ENCODE measurements at regions of chr13 and their contacts with region 1.

Region 1: GRCh38 chr13:28324181-28324789 is 170.6 kb downstream of the FLT1 start:
- DNase-seq: no peak
- H3K4me3 ChIP-seq: no peak overlapping the region
- H3K27ac ChIP-seq: no peak overlapping the region
- H3K4me1 ChIP-seq: peaks cover 0 to 10% (median 4%) of the 10 kb centered on the region in 4 donors
- H3K27me3 ChIP-seq: no peaks in the 10 kb centered on the region
- CTCF ChIP-seq: peak in 3 of 4 experiments; percentile 30 to 60 (median 41)
- EP300 ChIP-seq: no peak
- POLR2A ChIP-seq: no peak

Region 2: DNA sequence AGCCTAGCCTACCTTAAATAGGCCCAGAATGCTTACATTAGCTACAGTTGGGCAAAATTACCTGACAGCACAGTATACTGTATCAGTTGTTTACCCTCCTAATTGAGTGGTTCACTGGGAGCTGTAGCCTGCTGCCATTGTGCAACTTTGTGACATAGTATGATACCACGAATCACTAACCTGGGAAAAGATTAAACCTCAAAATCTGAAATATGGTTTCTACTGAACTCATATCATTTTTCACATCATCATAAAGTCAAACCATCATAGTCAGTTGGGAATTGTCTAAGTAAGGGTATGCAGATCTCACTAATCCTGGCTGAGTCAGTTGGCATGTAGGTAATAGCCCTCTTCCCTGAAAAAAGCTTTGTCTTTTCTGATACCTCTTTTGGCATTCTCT is 176.8 kb before region 1 on chr13:
- intact Hi-C with region 1: no loop called
- DNase-seq: no peak
- H3K4me3 ChIP-seq: no peak overlapping the region
- H3K27ac ChIP-seq: no peak overlapping the region
- H3K4me1 ChIP-seq: peaks cover 0 to 13% (median 8%) of the 10 kb centered on the region in 4 donors
- H3K27me3 ChIP-seq: no peaks in the 10 kb centered on the region
- CTCF ChIP-seq: no peak
- EP300 ChIP-seq: no peak
- POLR2A ChIP-seq: no peak

Region 3: DNA sequence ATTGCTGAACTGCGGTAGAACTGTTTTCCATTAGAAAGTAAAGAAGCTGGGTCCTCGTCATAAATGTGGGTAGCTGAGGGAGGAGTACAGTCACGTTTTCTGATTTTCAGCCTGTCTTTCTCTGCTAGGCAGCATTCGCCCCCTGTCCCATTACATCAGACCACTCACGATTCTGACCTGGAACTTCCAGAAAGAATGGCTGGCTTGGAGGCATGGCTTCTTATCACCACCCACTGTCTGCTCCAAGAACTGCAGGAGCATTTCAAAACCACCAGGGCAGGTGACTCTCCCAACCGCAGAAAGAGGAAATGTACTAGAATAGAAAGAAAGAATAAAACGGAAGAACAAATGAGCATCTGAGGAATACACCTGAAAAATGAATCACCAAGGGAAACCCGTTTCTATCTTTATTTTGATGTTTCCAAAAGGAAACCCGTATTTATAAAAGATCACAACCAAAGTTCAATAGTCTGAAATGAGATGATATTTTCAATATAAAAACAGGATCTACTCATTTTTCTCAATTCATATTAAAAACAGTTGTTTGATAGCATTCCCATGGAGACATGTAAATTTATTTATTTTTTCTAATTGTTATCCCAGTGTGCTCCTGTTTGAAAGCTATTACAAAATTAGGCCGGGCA is 312.5 kb after region 1 on chr13:
- intact Hi-C with region 1: loop called (anchors 5 kb)
- DNase-seq: no peak
- H3K4me3 ChIP-seq: no peak overlapping the region
- H3K27ac ChIP-seq: no peak overlapping the region
- H3K4me1 ChIP-seq: peaks cover 0 to 15% (median 4%) of the 10 kb centered on the region in 4 donors
- H3K27me3 ChIP-seq: no peaks in the 10 kb centered on the region
- CTCF ChIP-seq: peak; percentile 22 to 74 (median 67)
- EP300 ChIP-seq: no peak
- POLR2A ChIP-seq: no peak